AG04450 (cell line): ENCODE measurements at regions of chr15 and their contacts with region 1.

Region 1: DNA sequence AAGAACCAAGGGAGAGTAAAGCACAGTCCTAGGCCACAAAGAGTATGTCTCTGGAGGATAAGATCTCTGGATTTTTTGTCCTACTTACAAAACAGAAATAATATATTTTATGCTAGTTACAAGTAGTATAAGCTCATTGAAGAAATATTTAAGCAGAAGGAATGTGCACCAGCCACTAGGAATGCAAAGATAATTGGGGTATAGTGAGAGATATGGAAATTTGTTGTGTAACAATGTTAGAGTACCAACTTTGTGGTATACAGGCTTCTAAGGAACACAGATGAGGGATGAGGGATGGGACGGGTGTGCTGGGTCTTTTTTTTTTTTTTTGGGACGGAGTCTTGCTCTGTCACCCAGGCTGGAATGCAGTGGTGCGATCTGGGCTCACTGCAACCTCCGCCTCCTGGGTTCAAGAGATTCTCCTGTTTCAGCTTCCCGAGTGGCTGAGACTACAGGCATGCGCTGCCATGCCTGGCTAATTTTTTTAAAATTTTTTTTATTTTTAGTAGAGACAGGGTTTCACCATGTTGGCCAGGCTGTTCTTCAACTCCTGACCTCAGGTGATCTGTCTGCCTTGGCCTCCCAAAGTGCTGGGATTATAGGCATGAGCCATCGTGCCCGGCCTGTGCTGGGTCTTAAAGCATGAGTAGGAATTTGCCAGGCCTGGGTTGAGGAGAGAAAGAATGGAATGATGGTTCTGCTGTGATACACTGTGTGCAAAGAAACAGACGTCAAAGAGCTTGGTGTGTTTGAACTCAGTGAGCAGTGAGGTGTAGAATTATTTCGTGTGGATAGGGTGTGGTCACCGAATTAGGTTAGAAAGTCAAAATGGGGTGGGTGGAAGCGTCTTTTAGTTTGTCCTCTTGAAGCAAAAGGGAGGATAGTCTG is 26.8 kb downstream of the AKAP13 start:
- DNase-seq: no peak
- H3K4me3 ChIP-seq: no peak overlapping the region
- H3K27ac ChIP-seq: peak overlapping the region; percentile 58
- H3K27me3 ChIP-seq: no peaks in the 10 kb centered on the region
- CTCF ChIP-seq: no peak

Region 2: GRCh38 chr15:85324202-85324601 is 83.0 kb before region 1 on chr15:
- CTCF ChIA-PET with region 1: no interaction called
- POLR2A ChIA-PET with region 1: no interaction called
- DNase-seq: no peak
- H3K4me3 ChIP-seq: no peak overlapping the region
- H3K27ac ChIP-seq: no peak overlapping the region
- H3K27me3 ChIP-seq: no peaks in the 10 kb centered on the region
- CTCF ChIP-seq: no peak

Region 3: GRCh38 chr15:85380217-85380811 is 26.8 kb before region 1 on chr15 and contains the start of gene AKAP13:
- CTCF ChIA-PET with region 1: interaction called, 5 read pairs
- POLR2A ChIA-PET with region 1: interaction called, 11 read pairs
- DNase-seq: peak; percentile 99
- H3K4me3 ChIP-seq: peak within 1 kb of the TSS; percentile 70
- H3K27ac ChIP-seq: peak within 1 kb of the TSS; percentile 80
- H3K27me3 ChIP-seq: no peaks in the 10 kb centered on the region
- CTCF ChIP-seq: no peak
- polyA plus RNA-seq, gene AKAP13: 15.5 and 21.9 TPM in 2 replicates

Region 4: GRCh38 chr15:85707519-85708338 is 300.6 kb after region 1 on chr15:
- CTCF ChIA-PET with region 1: interaction called, 10 read pairs
- POLR2A ChIA-PET with region 1: no interaction called
- DNase-seq: no peak
- H3K4me3 ChIP-seq: peak overlapping the region; percentile 30
- H3K27ac ChIP-seq: peak overlapping the region; percentile 40
- H3K27me3 ChIP-seq: no peaks in the 10 kb centered on the region
- CTCF ChIP-seq: no peak